PC-3 (cell line): ENCODE measurements at regions of chr12 and their contacts with region 1.

Region 1: GRCh38 chr12:42641221-42641885 is 51.8 kb upstream of the PRICKLE1 start:
- DNase-seq: no peak
- ATAC-seq: no peak
- H3K4me3 ChIP-seq: no peak overlapping the region
- H3K27ac ChIP-seq: no peak overlapping the region
- H3K4me1 ChIP-seq: no peaks in the 10 kb centered on the region
- H3K27me3 ChIP-seq: no peaks in the 10 kb centered on the region
- CTCF ChIP-seq: no peak

Region 2: DNA sequence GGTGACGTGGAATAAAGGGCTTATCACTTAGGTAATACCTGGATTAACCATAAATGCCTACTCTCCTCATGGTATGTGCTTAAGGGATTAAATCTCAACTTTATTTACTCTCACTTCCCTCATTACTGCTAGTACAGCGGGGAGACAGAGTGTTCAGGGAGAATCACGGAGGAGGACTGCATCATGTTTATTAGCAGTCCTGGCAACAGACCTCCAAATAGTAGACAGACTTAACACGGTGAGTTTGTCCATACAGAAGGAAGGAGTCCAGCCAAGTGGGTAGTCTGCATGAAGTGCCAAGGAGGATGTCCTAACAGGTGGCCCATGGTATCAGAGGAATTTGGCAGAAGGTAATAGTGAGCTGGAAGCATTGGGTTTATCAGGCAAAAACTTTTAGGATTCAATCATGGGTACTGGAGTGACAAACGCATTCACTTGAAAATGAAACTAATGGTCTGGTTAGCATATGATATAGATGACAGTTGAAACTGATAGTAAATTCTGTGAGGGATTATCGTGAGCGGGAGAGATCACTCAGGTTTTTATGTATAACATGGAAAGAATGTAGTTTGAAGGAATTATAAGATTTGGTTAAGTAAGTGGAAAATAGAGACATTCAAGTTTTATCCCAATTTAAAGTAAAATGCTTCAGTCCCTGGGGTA is 1666.3 kb after region 1 on chr12:
- CTCF ChIA-PET with region 1: interaction called, 18 read pairs
- POLR2A ChIA-PET with region 1: no interaction called
- intact Hi-C with region 1: no loop called
- DNase-seq: no peak
- ATAC-seq: no peak
- H3K4me3 ChIP-seq: no peak overlapping the region
- H3K27ac ChIP-seq: no peak overlapping the region
- H3K4me1 ChIP-seq: no peaks in the 10 kb centered on the region
- H3K27me3 ChIP-seq: no peaks in the 10 kb centered on the region
- CTCF ChIP-seq: no peak